ENCODE measurements at regions of chr3 and their contacts with region 1.

Region 1: DNA sequence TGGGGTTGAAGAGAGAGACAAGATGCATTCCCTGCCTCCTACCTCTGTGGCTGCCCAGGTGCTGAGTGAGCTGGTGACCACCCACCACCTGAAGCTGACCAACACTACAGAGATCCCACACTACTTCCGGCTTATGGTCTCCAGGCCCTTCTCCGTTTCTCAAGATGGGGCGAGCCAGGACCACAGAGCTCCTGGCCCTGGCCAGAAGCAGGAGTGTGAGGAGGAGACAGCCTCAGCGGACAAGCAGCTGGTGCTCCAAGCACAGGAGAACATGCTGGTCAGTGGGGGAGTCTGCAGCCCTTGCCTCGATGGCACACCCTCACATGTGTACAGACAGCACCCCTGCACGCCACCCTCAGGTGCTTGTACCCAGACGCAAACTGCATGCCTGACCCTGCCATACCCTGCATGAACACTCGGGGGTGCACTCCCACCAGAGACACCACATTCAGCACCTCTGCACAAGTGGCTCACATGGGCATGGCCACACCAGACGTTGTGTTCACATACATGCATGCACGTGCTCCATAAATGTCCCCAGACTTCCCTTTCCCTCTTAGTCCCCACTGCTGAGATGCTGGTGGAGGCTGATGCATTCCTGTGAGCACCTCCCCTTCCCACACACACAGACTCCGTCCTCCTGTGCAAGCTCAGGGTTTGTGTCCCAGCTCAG is 19.0 kb downstream of the ACAA1 start:
- DNase-seq: peak in 1 of 2 experiments; percentile 56
- H3K4me3 ChIP-seq: no peak overlapping the region
- H3K27ac ChIP-seq: no peak overlapping the region
- H3K4me1 ChIP-seq: no peaks in the 10 kb centered on the region
- H3K27me3 ChIP-seq: no peaks in the 10 kb centered on the region
- CTCF ChIP-seq: peak; percentile 67

Region 2: DNA sequence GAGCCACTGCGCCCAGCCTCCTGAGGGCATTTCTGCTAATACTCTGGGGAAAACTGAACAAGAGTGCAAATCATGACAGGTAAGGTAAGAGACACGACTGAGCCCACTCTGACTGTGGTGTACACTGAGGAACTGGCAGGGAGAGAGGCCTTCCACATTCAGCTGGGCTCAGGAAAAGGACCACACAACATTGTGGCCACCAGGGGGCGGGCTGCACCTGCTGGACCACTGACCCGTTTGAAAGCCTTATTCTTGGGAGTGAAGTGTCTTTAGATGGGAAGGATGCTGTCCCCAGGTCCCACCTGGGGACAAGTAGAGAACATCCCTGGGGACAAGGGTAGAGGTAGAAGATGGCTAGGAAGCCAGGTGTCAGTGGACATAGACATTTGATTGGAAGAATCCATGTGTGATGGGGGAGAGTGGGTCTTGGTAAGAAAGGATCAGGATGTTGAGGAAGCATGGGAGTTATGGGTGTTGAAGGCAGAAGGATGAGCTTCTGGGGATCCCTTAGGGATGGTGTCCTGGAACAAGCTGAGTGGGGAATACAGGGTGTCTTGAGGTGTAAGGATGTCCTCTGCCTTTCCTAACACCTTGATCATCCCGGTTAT is 262.4 kb before region 1 on chr3:
- CTCF ChIA-PET with region 1: no interaction called
- POLR2A ChIA-PET with region 1: no interaction called
- intact Hi-C with region 1: loop called (anchors 5 kb)
- DNase-seq: peak; percentile 61 to 76
- H3K4me3 ChIP-seq: no peak overlapping the region
- H3K27ac ChIP-seq: no peak overlapping the region
- H3K4me1 ChIP-seq: peaks cover 16% of the 10 kb centered on the region
- H3K27me3 ChIP-seq: no peaks in the 10 kb centered on the region
- CTCF ChIP-seq: peak; percentile 91

Region 3: DNA sequence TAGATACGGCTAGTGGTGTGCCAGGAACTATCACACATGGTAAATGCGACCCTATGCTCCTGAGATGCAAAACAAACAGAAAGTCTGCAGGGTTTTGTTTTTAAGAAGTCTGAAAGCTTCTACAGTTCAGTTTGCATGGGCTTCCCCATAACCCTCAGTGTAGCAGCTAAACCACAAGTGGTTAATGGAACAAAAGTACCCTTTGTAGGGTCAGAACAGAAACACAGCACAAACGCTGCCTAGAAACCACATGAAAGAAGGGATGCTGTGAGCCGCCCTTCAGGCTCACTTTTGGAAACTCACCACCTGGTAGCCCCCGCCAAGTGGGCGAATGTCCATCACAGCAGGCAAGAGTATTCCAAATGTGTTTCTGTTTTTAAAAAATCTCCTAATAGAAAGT is 210.0 kb before region 1 on chr3:
- CTCF ChIA-PET with region 1: no interaction called
- POLR2A ChIA-PET with region 1: no interaction called
- intact Hi-C with region 1: no loop called
- DNase-seq: no peak
- H3K4me3 ChIP-seq: no peak overlapping the region
- H3K27ac ChIP-seq: no peak overlapping the region
- H3K4me1 ChIP-seq: 0 out of 2 replicates have a peak, but pooled peaks cover 7% of the 10 kb centered on the region
- H3K27me3 ChIP-seq: no peaks in the 10 kb centered on the region
- CTCF ChIP-seq: no peak

Region 4: GRCh38 chr3:38346587-38347410 is 228.9 kb after region 1 on chr3 and contains the start of gene XYLB:
- CTCF ChIA-PET with region 1: no interaction called
- POLR2A ChIA-PET with region 1: no interaction called
- intact Hi-C with region 1: loop called (anchors 5 kb)
- DNase-seq: peak; percentile 66 to 82
- H3K4me3 ChIP-seq: peak within 1 kb of the TSS; percentile 81
- H3K27ac ChIP-seq: no peak within 1 kb of the TSS
- H3K4me1 ChIP-seq: peaks cover 11% of the 10 kb centered on the region
- H3K27me3 ChIP-seq: no peaks in the 10 kb centered on the region
- CTCF ChIP-seq: peak; percentile 66
- total RNA-seq, gene XYLB: 2.4 and 4.2 TPM in 2 replicates

Region 5: GRCh38 chr3:38354588-38355330 is 236.9 kb after region 1 on chr3:
- CTCF ChIA-PET with region 1: interaction called, 12 read pairs
- POLR2A ChIA-PET with region 1: no interaction called
- intact Hi-C with region 1: loop called (anchors 5 kb)
- DNase-seq: no peak
- H3K4me3 ChIP-seq: no peak overlapping the region
- H3K27ac ChIP-seq: no peak overlapping the region
- H3K4me1 ChIP-seq: no peaks in the 10 kb centered on the region
- H3K27me3 ChIP-seq: no peaks in the 10 kb centered on the region
- CTCF ChIP-seq: no peak

Region 6: GRCh38 chr3:38496131-38496910 is 378.4 kb after region 1 on chr3 and contains the start of gene EXOG:
- CTCF ChIA-PET with region 1: no interaction called
- POLR2A ChIA-PET with region 1: interaction called, 11 read pairs
- intact Hi-C with region 1: no loop called
- DNase-seq: peak; percentile 71 to 88
- H3K4me3 ChIP-seq: peak within 1 kb of the TSS; percentile 88
- H3K27ac ChIP-seq: no peak within 1 kb of the TSS
- H3K4me1 ChIP-seq: 0 out of 2 replicates have a peak, but pooled peaks cover 4% of the 10 kb centered on the region
- H3K27me3 ChIP-seq: no peaks in the 10 kb centered on the region
- CTCF ChIP-seq: peak; percentile 85
- total RNA-seq, gene EXOG: 7.5 and 9.3 TPM in 2 replicates